Activated CD4-positive, alpha-beta memory T cell treated with anti-CD3 and anti-CD28 coated beads for 36 hours (primary cell): ENCODE measurements at regions of chr1 and their contacts with region 1.

Region 1: GRCh38 chr1:155001675-155002463 is 733 bp upstream of the ZBTB7B start:
- DNase-seq: peak; percentile 100
- H3K4me3 Mint-ChIP-seq: peak overlapping the region; percentile 94
- H3K27ac Mint-ChIP-seq: peak overlapping the region; percentile 95
- H3K4me1 Mint-ChIP-seq: peaks cover 50% of the 10 kb centered on the region
- H3K27me3 Mint-ChIP-seq: no peaks in the 10 kb centered on the region

Region 2: DNA sequence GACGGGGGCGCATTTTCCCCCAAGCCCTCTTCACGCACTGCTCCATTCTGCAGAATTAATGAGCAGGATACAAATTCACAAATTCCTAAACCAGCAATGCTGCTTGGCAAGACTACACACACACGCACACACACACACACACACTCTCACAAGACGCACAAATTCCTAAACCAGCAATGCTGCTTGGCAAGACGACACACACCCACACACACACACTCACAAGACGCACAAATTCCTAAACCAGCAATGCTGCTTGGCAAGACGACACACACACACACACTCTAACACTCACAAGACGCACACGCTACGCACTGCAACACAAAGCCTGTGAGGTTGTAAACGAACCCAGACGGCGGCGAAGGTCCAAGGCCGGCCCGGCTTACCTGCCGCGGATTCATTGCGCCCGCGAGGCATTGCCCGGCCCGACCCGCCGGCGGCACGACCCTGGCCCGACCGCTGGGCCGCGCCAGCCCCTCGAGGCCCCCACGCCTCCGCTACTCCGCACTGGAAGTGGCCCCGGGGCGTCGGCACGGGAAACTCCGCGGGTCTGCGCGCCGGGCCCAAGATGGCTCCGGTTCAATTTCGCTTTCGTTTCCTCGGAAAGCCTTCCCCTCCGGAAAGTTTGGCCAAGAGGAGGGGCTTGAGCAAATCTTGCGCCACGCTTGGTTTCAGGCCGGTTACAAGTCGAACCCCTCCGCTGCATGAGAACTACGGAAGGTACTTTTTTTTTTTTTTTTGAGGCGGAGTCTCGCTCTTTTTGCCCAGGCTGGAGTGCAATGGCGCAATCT is 394.1 kb before region 1 on chr1 and contains the start of gene ADAR:
- CTCF ChIA-PET with region 1: interaction called, 3 read pairs
- POLR2A ChIA-PET with region 1: no interaction called
- intact Hi-C with region 1: loop called (anchors 5 kb)
- DNase-seq: peak; percentile 96
- H3K4me3 Mint-ChIP-seq: peak within 1 kb of the TSS; percentile 90
- H3K27ac Mint-ChIP-seq: peak within 1 kb of the TSS; percentile 98
- H3K4me1 Mint-ChIP-seq: peaks cover 71% of the 10 kb centered on the region
- H3K27me3 Mint-ChIP-seq: no peaks in the 10 kb centered on the region
- total RNA-seq, gene ADAR: 270 to 289 TPM

Region 3: DNA sequence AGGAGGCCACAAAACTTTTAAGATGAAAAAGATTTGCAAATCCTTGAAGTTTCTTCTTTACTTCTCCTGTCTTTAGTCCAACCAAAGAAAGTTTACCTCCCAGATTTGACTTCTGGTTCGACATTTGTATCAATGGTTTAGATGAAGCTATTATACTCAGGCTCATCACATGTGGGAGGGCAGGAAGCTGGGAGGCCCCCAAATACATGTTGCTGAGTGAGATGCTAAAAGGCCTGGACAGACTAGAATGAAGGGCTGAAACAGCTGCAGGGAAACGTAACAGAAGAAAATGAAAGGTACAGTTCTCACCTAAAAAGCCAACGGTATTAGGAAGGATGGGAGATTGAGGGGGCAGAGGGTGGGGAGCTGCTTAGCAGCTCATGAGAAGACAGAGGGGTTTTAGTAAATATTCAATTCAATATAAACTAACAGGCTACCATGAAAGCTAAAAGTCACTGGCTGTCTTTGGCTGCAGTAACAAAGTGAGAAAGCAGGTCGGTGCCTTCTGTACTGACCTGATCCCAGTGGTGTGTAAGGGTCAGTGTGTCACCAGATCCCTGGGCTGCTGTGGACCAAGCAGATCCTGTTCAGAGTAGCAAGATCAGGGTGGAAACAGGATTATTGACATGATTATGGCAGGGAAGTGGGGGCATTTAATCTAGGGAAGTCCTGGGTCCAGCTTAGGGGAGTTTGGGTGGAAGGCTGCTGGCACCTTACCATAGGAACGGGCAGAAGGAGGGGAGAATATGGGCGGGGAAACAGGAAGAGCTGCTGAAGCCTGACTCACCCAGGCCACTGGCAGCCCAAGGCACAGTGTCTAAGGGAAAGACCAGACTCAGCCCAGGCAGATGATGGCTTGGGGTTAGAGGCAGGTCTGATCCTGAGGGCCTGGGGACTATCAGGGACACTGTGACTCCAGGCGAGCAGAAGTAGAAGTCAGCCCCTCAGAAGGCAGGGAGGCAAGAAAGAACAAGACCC is 192.1 kb before region 1 on chr1:
- CTCF ChIA-PET with region 1: no interaction called
- POLR2A ChIA-PET with region 1: no interaction called
- intact Hi-C with region 1: no loop called
- DNase-seq: peak; percentile 18
- H3K4me3 Mint-ChIP-seq: no peak overlapping the region
- H3K27ac Mint-ChIP-seq: no peak overlapping the region
- H3K4me1 Mint-ChIP-seq: peaks cover 12% of the 10 kb centered on the region
- H3K27me3 Mint-ChIP-seq: peaks cover 7% of the 10 kb centered on the region

Region 4: GRCh38 chr1:154961497-154962262 is 40.2 kb before region 1 on chr1 and contains the start of gene PYGO2:
- CTCF ChIA-PET with region 1: interaction called, 36 read pairs
- POLR2A ChIA-PET with region 1: interaction called, 23 read pairs
- intact Hi-C with region 1: no loop called
- DNase-seq: peak; percentile 88
- H3K4me3 Mint-ChIP-seq: peak within 1 kb of the TSS; percentile 96
- H3K27ac Mint-ChIP-seq: peak within 1 kb of the TSS; percentile 92
- H3K4me1 Mint-ChIP-seq: peaks cover 36% of the 10 kb centered on the region
- H3K27me3 Mint-ChIP-seq: no peaks in the 10 kb centered on the region
- total RNA-seq, gene PYGO2: 31.5 to 32.4 TPM

Region 5: GRCh38 chr1:155017041-155017945 is 15.4 kb after region 1 on chr1:
- CTCF ChIA-PET with region 1: interaction called, 144 read pairs
- POLR2A ChIA-PET with region 1: interaction called, 35 read pairs
- intact Hi-C with region 1: loop called (anchors 1 kb)
- DNase-seq: peak; percentile 97
- H3K4me3 Mint-ChIP-seq: peak overlapping the region; percentile 37
- H3K27ac Mint-ChIP-seq: peak overlapping the region; percentile 78
- H3K4me1 Mint-ChIP-seq: peaks cover 63% of the 10 kb centered on the region
- H3K27me3 Mint-ChIP-seq: no peaks in the 10 kb centered on the region

Region 6: DNA sequence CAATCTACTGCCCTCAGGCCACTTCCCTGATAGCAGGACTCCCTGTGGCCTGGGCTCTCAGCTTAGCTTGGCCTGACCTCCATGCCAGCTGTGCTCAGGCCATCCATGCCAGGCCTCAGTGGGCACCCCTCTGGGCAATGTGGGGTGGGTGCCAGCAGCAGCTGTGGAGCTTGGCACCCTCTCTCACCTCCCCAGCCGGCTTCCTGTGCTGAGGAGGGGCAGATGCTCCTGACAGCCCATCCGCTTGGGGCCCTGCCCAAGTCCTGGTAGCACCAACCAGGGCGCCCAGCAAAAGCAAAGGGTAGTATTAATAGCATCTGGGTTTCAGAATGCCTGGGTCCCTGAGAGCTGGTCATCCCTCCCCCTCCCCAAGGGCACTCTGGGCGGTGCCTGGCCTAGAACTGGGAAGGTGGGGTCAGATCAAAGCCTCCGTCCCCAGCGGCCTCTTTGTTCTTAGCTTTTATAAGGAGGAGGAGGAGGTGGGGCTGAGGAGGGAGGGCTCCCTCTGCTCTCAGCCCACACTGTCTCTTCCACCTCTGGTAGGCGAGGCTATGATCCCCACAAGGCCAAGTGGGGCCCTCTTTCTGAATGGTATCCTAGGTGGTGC is 67.8 kb after region 1 on chr1:
- CTCF ChIA-PET with region 1: no interaction called
- POLR2A ChIA-PET with region 1: no interaction called
- intact Hi-C with region 1: no loop called
- DNase-seq: no peak
- H3K4me3 Mint-ChIP-seq: no peak overlapping the region
- H3K27ac Mint-ChIP-seq: no peak overlapping the region
- H3K4me1 Mint-ChIP-seq: peaks cover 19% of the 10 kb centered on the region
- H3K27me3 Mint-ChIP-seq: no peaks in the 10 kb centered on the region

Region 7: DNA sequence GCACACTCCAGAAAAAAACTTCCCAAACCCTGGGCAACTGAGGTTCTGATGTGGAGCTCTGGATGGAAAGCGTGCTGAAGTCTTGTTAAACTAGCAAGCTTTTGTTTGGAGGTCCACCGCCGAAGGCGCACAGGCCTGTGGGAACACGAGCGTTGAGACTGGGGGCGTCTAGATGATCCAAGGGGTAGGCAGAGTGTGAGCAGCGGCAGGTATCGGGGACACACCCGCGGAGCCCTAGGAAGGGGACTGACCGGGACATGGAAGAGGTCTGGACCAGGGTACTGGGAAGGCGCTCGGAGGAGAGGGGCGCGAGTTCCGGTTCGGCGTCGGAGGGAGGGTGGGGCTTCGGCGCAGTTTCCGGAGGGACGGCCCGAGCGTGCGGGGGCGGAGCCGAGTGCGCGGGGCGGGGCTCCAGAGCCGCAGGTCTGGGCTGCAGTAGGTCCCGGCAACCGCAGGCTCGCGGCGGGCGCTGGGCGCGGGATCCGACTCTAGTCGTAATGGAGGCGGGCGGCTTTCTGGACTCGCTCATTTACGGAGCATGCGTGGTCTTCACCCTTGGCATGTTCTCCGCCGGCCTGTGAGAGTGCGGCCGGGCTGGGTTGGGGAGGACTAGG is 133.7 kb after region 1 on chr1 and contains the start of gene SLC50A1:
- CTCF ChIA-PET with region 1: interaction called, 4 read pairs
- POLR2A ChIA-PET with region 1: interaction called, 3 read pairs
- intact Hi-C with region 1: loop called (anchors 1 kb)
- DNase-seq: peak; percentile 96
- H3K4me3 Mint-ChIP-seq: peak within 1 kb of the TSS; percentile 91
- H3K27ac Mint-ChIP-seq: peak within 1 kb of the TSS; percentile 94
- H3K4me1 Mint-ChIP-seq: peaks cover 35% of the 10 kb centered on the region
- H3K27me3 Mint-ChIP-seq: no peaks in the 10 kb centered on the region
- total RNA-seq, gene SLC50A1: 60.1 TPM